ENCODE measurements at regions of chr5 and their contacts with region 1.

Region 1: DNA sequence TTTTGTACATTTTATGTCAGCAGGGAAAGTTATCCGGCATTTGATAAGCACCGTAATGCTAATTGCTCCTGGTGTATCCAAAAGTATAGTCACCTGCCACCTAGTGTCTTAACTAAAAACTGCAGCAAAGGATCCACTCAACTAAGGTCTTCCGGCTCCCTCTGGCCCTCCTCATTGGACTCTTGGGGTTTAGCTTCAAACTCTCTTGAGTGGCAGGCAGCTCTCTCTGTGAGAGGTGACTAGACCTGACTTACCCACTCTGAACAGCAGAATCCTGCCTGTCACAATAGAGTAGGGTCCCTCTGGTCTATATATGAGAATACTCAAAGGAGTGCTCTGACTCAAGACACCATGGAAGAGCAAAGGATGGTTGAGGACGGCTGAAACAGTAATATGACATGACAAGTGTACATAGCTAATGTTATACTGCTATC is 60.3 kb upstream of the CAST start:
- DNase-seq: no peak
- H3K4me3 ChIP-seq: no peak overlapping the region
- CTCF ChIP-seq: peak; percentile 62

Region 2: DNA sequence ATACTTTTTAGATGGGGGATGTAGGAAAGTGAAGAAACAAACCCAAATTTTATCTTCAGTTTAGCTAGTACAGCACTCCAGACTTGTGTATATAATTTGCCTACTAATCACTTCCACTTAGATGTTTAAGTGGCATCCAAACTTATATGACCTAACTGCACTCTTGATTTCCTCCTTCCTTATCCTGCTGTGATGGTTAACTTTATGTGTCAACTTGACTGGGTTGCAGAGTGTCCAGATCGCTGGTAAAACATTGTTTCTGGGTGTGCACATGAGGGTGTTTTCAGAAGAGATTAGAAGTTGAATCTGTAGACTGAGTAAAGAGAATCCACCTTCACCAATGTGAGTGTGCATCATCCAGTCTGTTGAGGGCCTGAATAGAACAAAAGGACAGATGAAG is 248.6 kb before region 1 on chr5:
- CTCF ChIA-PET with region 1: interaction called, 662 read pairs
- POLR2A ChIA-PET with region 1: no interaction called
- DNase-seq: no peak
- H3K4me3 ChIP-seq: no peak overlapping the region
- CTCF ChIP-seq: no peak

Region 3: GRCh38 chr5:96576876-96577275 is 25.0 kb before region 1 on chr5:
- CTCF ChIA-PET with region 1: interaction called, 30 read pairs
- POLR2A ChIA-PET with region 1: no interaction called
- DNase-seq: no peak
- H3K4me3 ChIP-seq: no peak overlapping the region
- CTCF ChIP-seq: no peak

Region 4: GRCh38 chr5:96582343-96582742 is 19.5 kb before region 1 on chr5:
- CTCF ChIA-PET with region 1: interaction called, 48 read pairs
- POLR2A ChIA-PET with region 1: no interaction called
- DNase-seq: no peak
- H3K4me3 ChIP-seq: no peak overlapping the region
- CTCF ChIP-seq: no peak

Region 5: DNA sequence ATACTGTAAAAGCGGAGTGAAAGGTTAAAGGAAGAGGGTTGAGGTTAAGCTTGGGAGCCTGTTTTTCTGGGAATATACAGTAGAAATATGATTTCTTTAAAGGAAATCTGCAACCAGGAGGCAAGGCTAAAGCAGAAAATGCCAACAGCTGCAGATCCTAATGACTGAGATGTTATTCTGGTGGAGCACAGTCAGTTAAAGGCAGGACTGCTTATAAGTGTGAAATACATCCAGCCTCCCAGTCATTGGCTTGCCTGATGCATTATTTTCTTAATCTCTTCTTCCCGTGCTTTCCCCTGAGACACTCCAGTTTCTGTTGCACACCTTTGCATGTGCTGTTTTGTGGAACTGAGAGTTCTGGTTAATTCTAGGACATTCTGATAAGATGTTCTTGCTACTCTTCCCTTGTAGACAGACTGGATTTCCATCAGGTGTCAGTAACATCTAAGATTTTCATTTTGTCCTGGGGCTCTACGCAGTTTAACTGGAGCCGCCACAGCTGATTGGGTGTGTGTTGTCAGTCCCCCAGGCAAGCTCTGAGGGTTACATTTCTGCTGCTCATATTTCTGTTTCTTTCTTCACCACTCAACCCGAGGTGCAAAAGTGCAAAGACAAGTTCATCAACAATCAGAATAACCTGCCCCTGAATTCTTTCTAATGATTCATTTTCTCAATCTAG is 104.7 kb after region 1 on chr5:
- CTCF ChIA-PET with region 1: no interaction called
- POLR2A ChIA-PET with region 1: no interaction called
- DNase-seq: no peak
- H3K4me3 ChIP-seq: no peak overlapping the region
- CTCF ChIP-seq: no peak